Breast epithelium (tissue), 4 donors: ENCODE measurements at regions of chr11 and their contacts with region 1.

Region 1: DNA sequence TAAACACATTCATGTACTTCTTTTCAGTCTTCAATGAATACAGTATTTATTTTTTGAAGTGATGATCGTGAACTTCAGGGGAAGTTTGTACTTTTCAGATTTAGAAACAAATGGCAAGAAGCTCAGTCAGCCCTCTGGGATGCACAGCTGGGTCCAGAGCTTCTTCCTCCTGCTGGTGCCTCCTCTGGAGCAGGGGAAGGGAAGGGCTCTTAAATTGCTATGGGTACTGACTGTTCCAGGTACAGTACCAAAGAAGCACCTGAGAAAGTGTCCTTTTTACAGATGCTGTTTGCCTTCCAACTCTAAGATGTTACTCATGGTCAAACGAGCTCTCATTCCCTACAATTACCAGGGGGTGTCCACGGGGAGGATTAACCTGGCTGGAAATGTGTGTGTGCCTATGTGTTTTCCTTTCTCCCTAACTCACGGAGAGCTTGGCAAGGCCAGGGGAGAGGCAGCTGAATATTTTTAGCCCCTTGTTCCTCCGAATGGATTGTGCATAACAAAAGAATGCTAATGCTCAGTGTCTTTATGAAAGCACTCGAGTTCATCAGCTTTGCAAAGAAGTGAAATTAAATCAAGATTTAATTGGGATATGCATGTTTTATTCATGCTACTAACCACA is 313.7 kb upstream of the CADM1 start:
- DNase-seq: no peak
- H3K4me3 ChIP-seq: no peak overlapping the region
- H3K27ac ChIP-seq: no peak overlapping the region
- H3K4me1 ChIP-seq: no peaks in the 10 kb centered on the region
- H3K27me3 ChIP-seq: no peaks in the 10 kb centered on the region
- CTCF ChIP-seq: no peak
- POLR2A ChIP-seq: no peak

Region 2: DNA sequence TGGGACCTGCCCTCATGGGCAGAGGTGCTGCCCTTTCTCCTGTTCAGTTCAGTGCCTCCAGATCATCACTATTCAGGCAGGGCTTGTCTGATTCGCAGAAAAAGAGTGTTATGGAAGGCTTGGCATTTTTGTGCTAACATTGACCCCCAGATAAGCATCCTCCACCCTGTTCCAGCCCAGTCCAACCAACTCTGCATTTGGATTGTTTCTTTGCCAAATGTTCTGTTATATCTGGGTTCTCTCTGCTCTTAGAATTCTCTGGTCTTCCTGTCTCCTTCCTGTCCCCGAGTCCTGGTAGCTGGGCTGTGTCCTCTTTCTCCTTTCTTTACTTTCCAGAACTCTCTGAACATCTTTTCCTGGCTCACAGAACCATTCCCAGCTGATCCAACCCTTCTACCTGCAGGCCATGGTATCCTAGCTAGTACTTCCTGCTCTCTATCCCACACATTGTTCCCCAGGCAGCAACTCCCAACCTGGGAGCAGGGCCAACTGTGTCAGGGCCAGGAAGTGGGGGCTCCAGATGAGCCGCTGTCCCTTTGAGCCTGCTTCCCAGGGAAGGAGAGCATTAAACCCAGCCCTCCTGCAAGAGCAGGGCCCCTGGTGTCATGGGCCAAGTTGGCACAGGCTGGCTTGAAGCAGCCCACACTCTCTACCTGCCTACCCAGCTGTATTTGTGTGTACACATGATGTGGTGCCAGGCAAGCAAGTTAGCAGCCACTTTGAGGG is 33.0 kb before region 1 on chr11:
- intact Hi-C with region 1: loop called (anchors 2 kb)
- DNase-seq: peak in 1 of 2 donors; percentile 29
- H3K4me3 ChIP-seq: no peak overlapping the region
- H3K27ac ChIP-seq: peak overlapping the region in 1 of 2 donors; percentile 43
- H3K4me1 ChIP-seq: no peaks in the 10 kb centered on the region
- H3K27me3 ChIP-seq: no peaks in the 10 kb centered on the region
- CTCF ChIP-seq: no peak
- POLR2A ChIP-seq: no peak